Aorta (tissue), 5 donors: ENCODE measurements at regions of chr3 and their contacts with region 1.

Region 1: GRCh38 chr3:47989981-47990440 is 26.2 kb downstream of the MAP4 start:
- DNase-seq: peak; percentile 82 to 88
- ATAC-seq: peak; percentile 95
- H3K4me3 ChIP-seq: no peak overlapping the region
- H3K27ac ChIP-seq: no peak overlapping the region
- H3K4me1 ChIP-seq: peaks cover 0 to 4% of the 10 kb centered on the region in 2 donors
- H3K27me3 ChIP-seq: no peaks in the 10 kb centered on the region

Region 2: GRCh38 chr3:47824541-47825473 is 165.2 kb before region 1 on chr3:
- intact Hi-C with region 1: loop called in 1 of 2 experiments (anchors 5 kb)
- DNase-seq: peak; percentile 84 to 92
- ATAC-seq: peak; percentile 97
- H3K4me3 ChIP-seq: peak overlapping the region; percentile 41 to 84
- H3K27ac ChIP-seq: no peak overlapping the region
- H3K4me1 ChIP-seq: no peaks in the 10 kb centered on the region
- H3K27me3 ChIP-seq: no peaks in the 10 kb centered on the region

Region 3: DNA sequence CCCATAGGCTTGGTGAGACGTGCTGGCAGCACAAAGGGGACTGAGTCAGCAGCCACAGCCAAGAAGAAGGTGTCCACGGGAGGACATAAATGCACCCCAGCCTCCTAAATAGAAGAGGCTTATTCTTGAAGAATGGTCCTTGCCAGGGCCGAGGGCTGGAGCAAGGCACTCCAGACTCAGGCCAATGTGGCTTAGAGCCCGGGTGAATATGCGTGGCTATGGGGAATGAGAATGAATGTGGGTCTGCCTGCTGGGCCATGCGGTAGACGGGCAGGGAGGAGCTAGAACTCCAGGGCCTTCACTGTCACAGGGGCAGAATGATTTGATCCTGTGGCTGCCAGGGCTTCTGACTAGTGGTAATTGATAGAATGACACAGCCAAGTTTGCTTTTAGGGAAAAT is 153.0 kb before region 1 on chr3:
- intact Hi-C with region 1: loop called in 1 of 2 experiments (anchors 5 kb)
- DNase-seq: no peak
- ATAC-seq: no peak
- H3K4me3 ChIP-seq: no peak overlapping the region
- H3K27ac ChIP-seq: no peak overlapping the region
- H3K4me1 ChIP-seq: no peaks in the 10 kb centered on the region
- H3K27me3 ChIP-seq: no peaks in the 10 kb centered on the region

Region 4: GRCh38 chr3:47899495-47900125 is 90.4 kb before region 1 on chr3:
- intact Hi-C with region 1: loop called in 1 of 2 experiments (anchors 5 kb)
- DNase-seq: no peak
- ATAC-seq: no peak
- H3K4me3 ChIP-seq: no peak overlapping the region
- H3K27ac ChIP-seq: no peak overlapping the region
- H3K4me1 ChIP-seq: peaks cover 2% of the 10 kb centered on the region in 2 donors
- H3K27me3 ChIP-seq: no peaks in the 10 kb centered on the region

Region 5: DNA sequence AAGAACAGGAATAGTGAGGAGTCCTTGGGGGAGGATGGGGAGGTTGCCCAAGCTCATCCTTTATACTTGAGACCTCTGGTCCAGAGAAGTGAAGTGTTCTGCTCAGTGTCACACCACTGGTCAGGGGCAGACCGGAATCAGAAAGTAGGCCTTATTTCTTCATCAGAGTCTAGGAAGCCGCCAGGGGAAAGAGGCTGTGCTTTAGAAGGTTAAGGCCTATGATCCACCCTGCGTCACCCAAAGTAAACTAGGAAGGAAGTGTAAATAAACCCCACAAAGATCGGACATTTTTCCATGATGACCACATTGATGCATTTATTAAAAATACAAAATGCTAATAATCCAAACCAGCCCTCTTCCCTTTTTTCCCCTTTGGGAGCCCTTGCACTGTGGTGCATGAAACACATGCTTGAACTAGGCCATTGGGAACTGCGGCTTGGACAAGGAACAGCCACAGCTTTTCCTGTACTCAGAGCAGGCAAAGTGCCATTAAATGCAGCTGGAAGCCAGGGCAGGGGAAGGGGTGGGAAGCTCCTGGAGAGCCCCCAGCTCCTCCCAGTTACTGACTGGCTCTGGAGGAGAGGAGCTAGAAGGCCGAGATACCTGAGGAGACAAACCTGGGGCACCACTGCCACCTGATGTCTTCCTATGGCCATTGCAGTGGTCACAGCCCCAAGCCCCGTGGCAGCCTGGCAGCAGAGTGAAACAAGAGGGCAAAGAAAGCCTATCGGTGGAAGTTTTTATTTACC is 161.2 kb after region 1 on chr3:
- intact Hi-C with region 1: loop called in 1 of 2 experiments (anchors 5 kb)
- DNase-seq: peak; percentile 79 to 91
- ATAC-seq: peak; percentile 94
- H3K4me3 ChIP-seq: no peak overlapping the region
- H3K27ac ChIP-seq: peak overlapping the region in 1 of 2 donors; percentile 66
- H3K4me1 ChIP-seq: peaks cover 0 to 1% of the 10 kb centered on the region in 2 donors
- H3K27me3 ChIP-seq: no peaks in the 10 kb centered on the region